PC-9 (cell line): ENCODE measurements at regions of chr14 and their contacts with region 1.

Region 1: DNA sequence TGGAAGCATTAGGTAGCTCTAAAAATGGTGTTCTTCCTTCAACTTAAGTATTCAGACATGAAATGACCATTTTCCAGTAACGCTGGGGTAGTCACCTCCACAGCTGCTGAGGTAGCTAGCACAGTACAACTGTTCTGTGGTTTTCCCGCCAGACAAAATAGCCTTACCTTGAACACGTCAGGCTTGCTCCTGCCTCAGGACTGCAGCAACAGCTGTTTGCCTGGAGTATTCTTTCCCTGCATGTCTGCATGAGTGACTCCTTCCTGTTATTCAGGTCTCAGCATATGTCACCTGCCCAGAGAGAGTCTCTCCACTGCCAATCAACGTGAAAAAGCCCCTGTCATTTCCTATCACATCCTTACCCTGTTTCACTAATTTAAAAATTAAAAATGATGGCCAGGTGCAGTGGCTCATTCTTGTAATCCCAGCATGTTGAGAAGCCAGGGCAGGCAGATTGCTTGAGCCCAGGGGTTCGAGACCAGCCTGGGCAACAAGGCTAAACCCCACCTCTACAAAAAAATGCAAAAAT is 37.9 kb downstream of the WDR89 start:
- DNase-seq: no peak
- H3K4me3 ChIP-seq: no peak overlapping the region
- H3K27ac ChIP-seq: no peak overlapping the region
- H3K4me1 ChIP-seq: no peaks in the 10 kb centered on the region
- H3K27me3 ChIP-seq: no peaks in the 10 kb centered on the region
- CTCF ChIP-seq: no peak

Region 2: DNA sequence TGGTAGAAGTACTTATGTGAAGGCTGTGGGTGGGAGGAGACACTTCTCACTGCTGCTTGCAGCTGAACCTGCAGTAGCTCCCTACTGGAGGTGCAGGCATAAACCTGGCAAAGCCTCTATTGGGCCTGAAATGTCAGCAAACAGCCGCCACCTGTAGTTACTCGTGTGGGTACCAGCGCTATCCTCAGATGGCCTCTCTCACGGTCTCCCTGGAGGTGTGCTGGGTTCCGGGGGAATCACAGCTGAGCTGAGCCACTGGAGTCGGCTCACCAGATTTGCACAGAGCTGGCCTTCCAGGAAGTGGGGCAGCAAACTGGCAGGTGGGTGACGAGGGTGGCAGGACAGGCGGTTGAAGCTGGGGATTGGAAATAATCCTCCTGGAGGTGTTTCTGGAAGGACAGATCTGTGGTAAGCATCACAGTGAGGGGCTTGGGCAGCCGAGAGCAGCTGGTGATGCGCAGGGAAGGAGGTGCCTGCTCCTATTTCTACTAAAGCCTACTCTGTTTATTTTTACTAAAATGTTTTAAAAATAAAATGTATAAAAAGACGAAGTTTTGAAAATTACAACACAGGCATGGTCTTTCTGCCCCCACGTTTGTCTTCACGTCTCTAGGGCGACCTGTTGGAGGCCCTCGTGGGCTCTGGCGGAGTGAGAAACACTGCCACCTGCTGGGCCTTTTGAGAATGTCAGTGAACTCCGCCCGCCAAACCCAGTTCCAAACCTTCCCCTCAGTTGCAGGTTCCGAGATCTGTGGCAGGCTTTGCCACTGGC is 1032.6 kb after region 1 on chr14:
- CTCF ChIA-PET with region 1: no interaction called
- POLR2A ChIA-PET with region 1: interaction called, 19 read pairs
- intact Hi-C with region 1: no loop called
- DNase-seq: peak in 1 of 2 experiments; percentile 68
- H3K4me3 ChIP-seq: no peak overlapping the region
- H3K27ac ChIP-seq: no peak overlapping the region
- H3K4me1 ChIP-seq: peaks cover 34% of the 10 kb centered on the region
- H3K27me3 ChIP-seq: no peaks in the 10 kb centered on the region
- CTCF ChIP-seq: peak; percentile 98